Activated naive CD4-positive, alpha-beta T cell treated with anti-CD3 and anti-CD28 coated beads for 36 hours (primary cell): ENCODE measurements at regions of chr2 and their contacts with region 1.

Region 1: DNA sequence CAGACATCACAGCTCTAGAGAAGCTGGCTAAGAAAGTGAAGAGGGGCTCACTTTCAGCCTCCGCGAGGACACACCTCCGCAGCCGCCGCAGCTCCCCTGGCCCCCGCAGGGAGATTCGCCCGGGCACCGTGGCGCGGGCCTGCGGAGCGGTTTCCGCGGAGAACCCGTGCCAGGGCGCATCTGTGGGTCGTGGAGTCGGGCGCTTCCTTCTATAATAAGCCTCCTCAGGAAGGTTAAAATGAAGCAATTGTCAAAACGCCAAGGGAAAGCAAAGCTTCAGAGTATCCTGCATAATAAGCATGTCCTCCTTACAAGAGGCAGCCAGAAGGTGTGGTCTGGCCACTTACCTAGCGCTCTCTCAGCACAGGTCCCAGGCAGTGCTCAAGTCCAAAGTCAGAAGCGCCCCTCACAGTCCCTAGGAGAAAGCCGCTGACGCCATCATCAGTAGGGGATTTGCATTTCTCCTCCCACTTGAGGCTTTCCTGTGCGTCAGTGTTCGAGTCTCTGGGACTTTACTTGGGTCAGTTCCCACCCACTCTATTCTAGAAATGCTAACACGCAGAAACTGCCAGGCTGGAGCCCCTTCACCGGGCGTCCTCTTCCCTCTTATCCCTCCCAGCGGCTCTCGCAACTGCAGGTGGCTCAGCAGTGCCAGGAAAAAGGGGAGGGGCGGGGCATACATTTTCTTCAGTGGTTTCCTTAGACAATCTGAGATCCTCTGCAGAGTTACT is at the start of gene STAT4:
- DNase-seq: peak; percentile 94
- H3K4me3 Mint-ChIP-seq: peak within 1 kb of the TSS; percentile 91
- H3K27ac Mint-ChIP-seq: peak within 1 kb of the TSS; percentile 97
- H3K4me1 Mint-ChIP-seq: peaks cover 57% of the 10 kb centered on the region
- H3K27me3 Mint-ChIP-seq: no peaks in the 10 kb centered on the region
- total RNA-seq, gene STAT4: 53.9 to 54.6 TPM

Region 2: DNA sequence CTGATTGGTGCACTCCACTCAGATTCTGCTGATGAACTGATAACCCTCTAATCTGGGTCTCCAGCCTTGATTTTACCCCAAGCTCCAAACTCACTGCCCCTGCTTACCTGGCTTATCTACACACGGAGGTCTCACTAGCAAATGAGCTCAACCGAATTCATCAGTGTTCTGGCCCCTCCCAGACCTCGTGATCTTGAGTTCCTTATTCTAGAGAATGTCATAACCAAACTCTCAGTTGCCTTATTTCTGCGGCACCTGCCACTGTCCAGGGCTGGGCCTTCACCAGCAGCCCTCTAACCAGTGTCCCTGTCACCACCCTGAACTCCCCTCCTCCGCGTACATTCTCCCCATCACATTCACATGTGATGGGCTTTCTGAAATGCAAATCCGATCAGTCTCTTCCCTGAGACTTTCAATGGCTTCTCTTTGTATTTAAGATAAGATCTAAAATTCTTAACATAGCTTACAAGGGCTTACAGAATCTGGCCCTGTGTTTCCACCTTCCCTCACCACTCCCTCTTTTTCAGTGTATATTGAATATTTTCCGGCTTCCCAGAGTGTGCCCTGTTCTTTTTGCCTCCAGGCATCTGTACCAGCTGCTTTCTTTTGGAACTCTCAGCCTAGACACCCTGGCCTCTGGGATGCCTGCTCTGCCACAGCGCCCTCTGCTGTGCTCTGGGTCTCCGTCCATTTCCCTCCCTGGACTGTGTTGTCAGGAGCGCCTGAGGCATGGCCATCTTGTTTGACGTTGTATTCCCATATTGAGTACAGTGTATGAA is 470.8 kb before region 1 on chr2:
- CTCF ChIA-PET with region 1: interaction called, 4 read pairs
- intact Hi-C with region 1: loop called (anchors 1 kb)
- DNase-seq: peak; percentile 75
- H3K4me3 Mint-ChIP-seq: peak overlapping the region; percentile 13
- H3K27ac Mint-ChIP-seq: peak overlapping the region; percentile 81
- H3K4me1 Mint-ChIP-seq: peaks cover 52% of the 10 kb centered on the region
- H3K27me3 Mint-ChIP-seq: no peaks in the 10 kb centered on the region

Region 3: DNA sequence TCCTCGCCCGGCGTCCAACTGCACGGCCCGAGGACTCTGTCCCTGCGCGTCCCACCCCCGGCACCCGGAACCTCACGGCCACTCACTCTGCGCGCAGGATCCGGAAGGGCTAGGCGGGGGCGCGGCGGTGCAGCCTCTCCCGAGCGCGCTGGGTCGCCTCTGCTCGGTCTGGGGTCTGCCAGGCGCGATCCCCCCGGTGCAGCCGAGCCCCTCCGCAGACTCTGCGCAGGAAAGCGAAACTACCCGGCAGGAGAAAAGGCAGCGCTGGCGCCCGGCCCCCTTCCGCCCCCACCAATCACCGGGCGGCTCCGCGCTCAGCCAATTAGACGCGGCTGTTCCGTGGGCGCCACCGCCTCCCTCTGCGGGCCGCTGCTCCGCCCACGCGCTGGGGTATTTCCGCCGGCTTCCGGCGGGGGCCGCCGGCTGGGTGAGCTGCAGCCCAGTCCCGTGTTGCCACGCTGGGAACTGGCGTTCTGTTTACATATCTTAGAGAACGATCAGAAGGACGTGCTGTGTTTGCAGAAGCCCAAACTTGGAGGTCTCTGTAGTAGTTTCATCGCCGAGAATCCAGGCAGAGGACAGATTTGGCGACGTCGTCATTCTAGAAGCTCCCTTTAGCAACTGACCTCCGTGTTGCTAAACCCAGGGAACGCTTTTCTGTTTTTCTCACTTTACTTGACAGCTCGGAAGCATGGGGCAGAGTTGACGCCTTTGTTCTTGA is 136.7 kb before region 1 on chr2 and contains the start of gene STAT1:
- CTCF ChIA-PET with region 1: interaction called, 5 read pairs
- intact Hi-C with region 1: loop called (anchors 1 kb)
- DNase-seq: peak; percentile 95
- H3K4me3 Mint-ChIP-seq: no peak within 1 kb of the TSS
- H3K27ac Mint-ChIP-seq: no peak within 1 kb of the TSS
- H3K4me1 Mint-ChIP-seq: peaks cover 39% of the 10 kb centered on the region
- H3K27me3 Mint-ChIP-seq: no peaks in the 10 kb centered on the region
- total RNA-seq, gene STAT1: 376 to 402 TPM

Region 4: GRCh38 chr2:191045141-191045540 is 105.6 kb before region 1 on chr2:
- CTCF ChIA-PET with region 1: interaction called, 419 read pairs
- intact Hi-C with region 1: no loop called
- DNase-seq: no peak
- H3K4me3 Mint-ChIP-seq: no peak overlapping the region
- H3K27ac Mint-ChIP-seq: no peak overlapping the region
- H3K4me1 Mint-ChIP-seq: peaks cover 12% of the 10 kb centered on the region
- H3K27me3 Mint-ChIP-seq: no peaks in the 10 kb centered on the region

Region 5: GRCh38 chr2:191078165-191078867 is 72.4 kb before region 1 on chr2:
- CTCF ChIA-PET with region 1: interaction called, 9 read pairs
- intact Hi-C with region 1: loop called (anchors 1 kb)
- DNase-seq: no peak
- H3K4me3 Mint-ChIP-seq: peak overlapping the region; percentile 61
- H3K27ac Mint-ChIP-seq: peak overlapping the region; percentile 82
- H3K4me1 Mint-ChIP-seq: peaks cover 54% of the 10 kb centered on the region
- H3K27me3 Mint-ChIP-seq: no peaks in the 10 kb centered on the region

Region 6: GRCh38 chr2:191165176-191165643 is 14.4 kb after region 1 on chr2:
- CTCF ChIA-PET with region 1: interaction called, 28 read pairs
- intact Hi-C with region 1: no loop called
- DNase-seq: peak; percentile 46
- H3K4me3 Mint-ChIP-seq: no peak overlapping the region
- H3K27ac Mint-ChIP-seq: peak overlapping the region; percentile 65
- H3K4me1 Mint-ChIP-seq: peaks cover 21% of the 10 kb centered on the region
- H3K27me3 Mint-ChIP-seq: peaks cover 2% of the 10 kb centered on the region

Region 7: GRCh38 chr2:191677646-191678436 is 527.1 kb after region 1 on chr2 and contains the start of gene NABP1:
- CTCF ChIA-PET with region 1: no interaction called
- intact Hi-C with region 1: loop called (anchors 1 kb)
- DNase-seq: peak; percentile 99
- H3K4me3 Mint-ChIP-seq: peak within 1 kb of the TSS; percentile 99
- H3K27ac Mint-ChIP-seq: peak within 1 kb of the TSS; percentile 100
- H3K4me1 Mint-ChIP-seq: peaks cover 37% of the 10 kb centered on the region
- H3K27me3 Mint-ChIP-seq: no peaks in the 10 kb centered on the region
- total RNA-seq, gene NABP1: 97.5 to 101 TPM